T-cell (primary cell): ENCODE measurements at regions of chr1 and their contacts with region 1.

Region 1: DNA sequence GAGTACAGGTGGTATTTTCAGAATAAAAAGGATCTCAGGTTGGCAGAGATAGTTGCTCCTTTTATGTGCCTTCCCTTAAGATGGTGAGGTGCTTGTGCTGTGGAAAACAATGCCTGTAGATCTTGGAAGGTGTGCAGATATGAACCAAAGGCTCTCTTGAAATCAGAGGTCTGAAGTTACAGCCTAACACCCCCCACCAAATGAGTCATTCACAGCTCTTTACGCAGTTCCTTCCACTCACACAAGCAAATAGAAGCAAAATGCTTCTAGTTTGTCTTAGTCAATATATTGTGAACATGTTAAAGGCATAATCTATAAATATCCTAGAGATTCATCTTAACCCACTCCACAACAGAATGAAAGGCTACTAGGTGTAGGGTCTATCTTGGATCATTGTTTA is 128.9 kb upstream of the NR5A2 start:
- DNase-seq: no peak
- ATAC-seq: no peak
- H3K4me3 ChIP-seq: no peak overlapping the region
- H3K4me3 Mint-ChIP-seq: no peak overlapping the region
- H3K27ac ChIP-seq: no peak overlapping the region
- H3K27ac Mint-ChIP-seq: no peak overlapping the region
- H3K4me1 ChIP-seq: no peaks in the 10 kb centered on the region
- H3K4me1 Mint-ChIP-seq: no peaks in the 10 kb centered on the region
- H3K27me3 ChIP-seq: peaks cover 0 to 6% of the 10 kb centered on the region in 2 experiments
- H3K27me3 Mint-ChIP-seq: peaks cover 0 to 13% of the 10 kb centered on the region in 2 donors

Region 2: DNA sequence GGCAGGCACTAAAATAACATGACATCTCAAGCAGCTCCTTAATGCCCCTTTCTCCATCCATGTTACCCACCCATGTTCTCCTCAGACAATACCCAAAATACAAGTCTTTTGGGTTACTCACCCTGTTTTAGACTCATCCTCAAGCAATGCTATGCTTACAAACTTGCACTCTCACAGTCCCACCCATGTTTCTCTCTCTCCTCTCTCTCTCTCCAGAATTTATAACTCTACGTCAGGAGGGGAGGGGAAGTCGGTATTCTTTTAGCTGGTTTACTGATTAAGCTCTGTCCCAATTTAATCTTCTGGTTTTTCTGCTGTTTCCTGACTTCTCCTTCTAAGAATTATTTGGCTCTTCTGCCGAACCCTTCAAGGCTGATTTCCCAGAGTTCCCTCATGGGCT is 30.9 kb after region 1 on chr1:
- CTCF ChIA-PET with region 1: no interaction called
- POLR2A ChIA-PET with region 1: no interaction called
- DNase-seq: no peak
- ATAC-seq: no peak
- H3K4me3 ChIP-seq: no peak overlapping the region
- H3K4me3 Mint-ChIP-seq: no peak overlapping the region
- H3K27ac ChIP-seq: no peak overlapping the region
- H3K27ac Mint-ChIP-seq: no peak overlapping the region
- H3K4me1 ChIP-seq: peaks cover 2 to 3% of the 10 kb centered on the region in 2 experiments
- H3K4me1 Mint-ChIP-seq: peaks cover 9 to 11% (median 9%) of the 10 kb centered on the region in 3 donors
- H3K27me3 ChIP-seq: peaks cover 0 to 8% of the 10 kb centered on the region in 2 experiments
- H3K27me3 Mint-ChIP-seq: no peaks in the 10 kb centered on the region

Region 3: GRCh38 chr1:199956005-199956404 is 57.4 kb after region 1 on chr1:
- CTCF ChIA-PET with region 1: no interaction called
- POLR2A ChIA-PET with region 1: interaction called in 1 of 2 experiments, 11 read pairs
- DNase-seq: no peak
- ATAC-seq: no peak
- H3K4me3 ChIP-seq: no peak overlapping the region
- H3K4me3 Mint-ChIP-seq: no peak overlapping the region
- H3K27ac ChIP-seq: no peak overlapping the region
- H3K27ac Mint-ChIP-seq: no peak overlapping the region
- H3K4me1 ChIP-seq: no peaks in the 10 kb centered on the region
- H3K4me1 Mint-ChIP-seq: no peaks in the 10 kb centered on the region
- H3K27me3 ChIP-seq: peaks cover 0 to 9% of the 10 kb centered on the region in 2 experiments
- H3K27me3 Mint-ChIP-seq: peaks cover 3 to 11% of the 10 kb centered on the region in 2 donors